ENCODE measurements at regions of chr20 and their contacts with region 1.

Region 1: DNA sequence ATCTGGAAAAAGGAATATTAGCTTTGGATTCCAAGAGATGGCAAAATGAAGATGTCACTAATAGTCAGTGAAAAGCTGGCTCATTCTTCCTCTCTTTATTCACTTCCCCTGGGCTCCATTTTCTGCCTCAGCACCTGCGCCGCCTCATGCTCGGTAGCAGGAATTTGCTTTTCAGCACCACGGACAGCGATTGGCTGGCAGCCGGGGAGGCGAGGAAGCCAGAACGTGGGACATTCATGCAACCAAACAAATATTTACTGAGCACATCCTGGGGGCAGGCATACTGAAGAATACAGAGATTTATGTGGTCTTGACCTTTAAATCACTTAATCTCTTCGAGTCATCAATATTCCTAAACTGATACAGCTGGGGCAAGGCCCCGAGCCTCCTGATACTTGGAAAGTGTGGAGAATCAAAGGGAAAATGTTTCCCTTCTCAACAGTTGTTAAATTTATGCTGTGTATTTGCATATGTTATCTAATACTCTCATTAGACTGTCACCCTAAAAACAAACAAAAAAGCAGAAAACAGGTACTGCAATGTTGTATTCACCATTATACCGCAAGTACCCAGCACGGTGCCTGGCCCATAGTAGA is 12.1 kb upstream of the PDYN start:
- DNase-seq: peak; percentile 36 to 94
- H3K4me3 ChIP-seq: no peak overlapping the region
- H3K27ac ChIP-seq: no peak overlapping the region
- H3K4me1 ChIP-seq: peaks cover 0 to 14% (median 7%) of the 10 kb centered on the region in 4 experiments; a peak in 3 of 7 replicates
- H3K27me3 ChIP-seq: peaks cover 0 to 8% (median under 1%) of the 10 kb centered on the region in 4 experiments; a peak in 3 of 7 replicates
- CTCF ChIP-seq: no peak
- EP300 ChIP-seq: no peak
- POLR2A ChIP-seq: no peak
- RAD21 ChIP-seq: peak; percentile 8 to 25; a peak in 1 of 4 replicates

Region 2: DNA sequence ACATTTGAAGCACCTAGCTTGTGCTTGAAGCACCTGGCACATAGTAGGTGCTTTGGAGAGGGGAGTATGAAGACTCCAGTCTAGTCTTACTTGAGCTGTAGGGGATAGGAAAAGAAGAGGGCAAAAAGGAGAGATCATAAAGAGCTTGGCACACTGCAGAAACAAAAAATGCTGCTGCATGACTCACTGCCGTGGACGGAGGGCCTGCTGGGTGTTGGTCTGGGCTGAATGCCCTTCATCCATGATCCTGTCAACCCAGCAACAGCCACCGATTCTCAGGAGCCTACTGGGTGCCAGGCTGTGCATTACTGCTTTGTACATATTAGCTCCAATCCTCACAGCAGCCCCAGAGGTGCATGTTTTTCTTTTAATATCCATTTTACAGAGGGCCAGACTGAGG is 18.1 kb before region 1 on chr20:
- CTCF ChIA-PET with region 1: interaction called, 27 read pairs
- POLR2A ChIA-PET with region 1: no interaction called
- DNase-seq: no peak
- H3K4me3 ChIP-seq: no peak overlapping the region
- H3K27ac ChIP-seq: no peak overlapping the region
- H3K4me1 ChIP-seq: peaks cover 2 to 12% (median 6%) of the 10 kb centered on the region in 4 experiments; a peak in 6 of 7 replicates
- H3K27me3 ChIP-seq: peaks cover 0 to 3% (median 0%) of the 10 kb centered on the region in 4 experiments; a peak in 1 of 7 replicates
- CTCF ChIP-seq: no peak
- EP300 ChIP-seq: no peak
- POLR2A ChIP-seq: no peak
- RAD21 ChIP-seq: no peak

Region 3: GRCh38 chr20:2022163-2022562 is 16.2 kb after region 1 on chr20:
- CTCF ChIA-PET with region 1: interaction called, 88 read pairs
- POLR2A ChIA-PET with region 1: interaction called, 3 read pairs
- DNase-seq: no peak
- H3K4me3 ChIP-seq: no peak overlapping the region
- H3K27ac ChIP-seq: no peak overlapping the region
- H3K4me1 ChIP-seq: no peaks in the 10 kb centered on the region
- H3K27me3 ChIP-seq: no peaks in the 10 kb centered on the region
- CTCF ChIP-seq: no peak
- EP300 ChIP-seq: no peak
- POLR2A ChIP-seq: no peak
- RAD21 ChIP-seq: no peak

Region 4: GRCh38 chr20:2038161-2038560 is 32.2 kb after region 1 on chr20:
- CTCF ChIA-PET with region 1: interaction called, 36 read pairs
- POLR2A ChIA-PET with region 1: no interaction called
- DNase-seq: no peak
- H3K4me3 ChIP-seq: no peak overlapping the region
- H3K27ac ChIP-seq: no peak overlapping the region
- H3K4me1 ChIP-seq: no peaks in the 10 kb centered on the region
- H3K27me3 ChIP-seq: no peaks in the 10 kb centered on the region
- CTCF ChIP-seq: no peak
- EP300 ChIP-seq: no peak
- POLR2A ChIP-seq: no peak
- RAD21 ChIP-seq: no peak

Region 5: GRCh38 chr20:2093159-2093781 is 87.3 kb after region 1 on chr20:
- CTCF ChIA-PET with region 1: interaction called, 36 read pairs
- POLR2A ChIA-PET with region 1: no interaction called
- DNase-seq: peak in 1 of 2 experiments; percentile 58
- H3K4me3 ChIP-seq: no peak overlapping the region
- H3K27ac ChIP-seq: no peak overlapping the region
- H3K4me1 ChIP-seq: peaks cover 0 to 10% (median 7%) of the 10 kb centered on the region in 4 experiments; a peak in 4 of 7 replicates
- H3K27me3 ChIP-seq: no peaks in the 10 kb centered on the region; a peak in 1 of 7 replicates
- CTCF ChIP-seq: peak; percentile 82 to 89 (median 86)
- EP300 ChIP-seq: no peak
- POLR2A ChIP-seq: no peak
- RAD21 ChIP-seq: peak; percentile 91 to 94